ENCODE measurements at regions of chr3 and their contacts with region 1.

Region 1: DNA sequence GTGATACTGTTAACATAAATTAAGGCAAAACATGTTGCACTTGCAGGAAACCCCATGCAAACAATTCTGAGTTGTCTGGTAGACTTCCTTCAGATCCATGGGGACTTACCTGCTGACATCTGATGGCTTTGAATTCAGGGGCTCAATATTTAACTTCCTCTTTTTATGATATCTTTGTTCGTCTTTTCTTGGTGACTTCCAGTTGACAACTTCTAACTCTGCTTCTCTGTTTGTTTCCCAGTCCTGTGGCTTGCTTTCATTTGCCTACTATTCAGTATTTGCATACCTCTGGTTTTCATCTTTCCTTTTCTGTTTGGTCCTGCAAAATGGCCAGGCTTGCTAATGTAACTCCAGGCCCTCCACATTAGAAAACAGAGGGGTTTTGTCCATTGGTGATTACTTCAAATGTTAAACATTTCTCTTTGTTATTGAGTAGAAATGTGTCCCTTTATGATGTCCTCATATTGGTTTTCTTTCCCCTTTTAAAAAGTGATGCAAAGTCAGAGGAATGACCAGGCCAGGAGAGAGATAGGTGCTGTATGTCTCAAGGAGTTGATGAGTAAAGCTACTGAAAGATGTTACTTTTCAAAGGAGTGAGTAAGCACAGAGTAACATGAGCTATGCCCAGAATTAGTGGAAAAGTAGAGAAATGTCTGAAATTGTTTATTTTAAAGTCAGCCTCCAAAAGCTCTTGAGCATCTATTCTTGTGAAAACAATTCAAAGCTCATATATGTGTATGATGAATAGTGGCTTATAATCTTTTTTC is 335.9 kb downstream of the LPP start:
- DNase-seq: no peak
- ATAC-seq: no peak
- H3K4me3 ChIP-seq: no peak overlapping the region
- H3K27ac ChIP-seq: no peak overlapping the region
- H3K4me1 ChIP-seq: peaks cover 14% of the 10 kb centered on the region
- H3K27me3 ChIP-seq: no peaks in the 10 kb centered on the region
- CTCF ChIP-seq: no peak

Region 2: DNA sequence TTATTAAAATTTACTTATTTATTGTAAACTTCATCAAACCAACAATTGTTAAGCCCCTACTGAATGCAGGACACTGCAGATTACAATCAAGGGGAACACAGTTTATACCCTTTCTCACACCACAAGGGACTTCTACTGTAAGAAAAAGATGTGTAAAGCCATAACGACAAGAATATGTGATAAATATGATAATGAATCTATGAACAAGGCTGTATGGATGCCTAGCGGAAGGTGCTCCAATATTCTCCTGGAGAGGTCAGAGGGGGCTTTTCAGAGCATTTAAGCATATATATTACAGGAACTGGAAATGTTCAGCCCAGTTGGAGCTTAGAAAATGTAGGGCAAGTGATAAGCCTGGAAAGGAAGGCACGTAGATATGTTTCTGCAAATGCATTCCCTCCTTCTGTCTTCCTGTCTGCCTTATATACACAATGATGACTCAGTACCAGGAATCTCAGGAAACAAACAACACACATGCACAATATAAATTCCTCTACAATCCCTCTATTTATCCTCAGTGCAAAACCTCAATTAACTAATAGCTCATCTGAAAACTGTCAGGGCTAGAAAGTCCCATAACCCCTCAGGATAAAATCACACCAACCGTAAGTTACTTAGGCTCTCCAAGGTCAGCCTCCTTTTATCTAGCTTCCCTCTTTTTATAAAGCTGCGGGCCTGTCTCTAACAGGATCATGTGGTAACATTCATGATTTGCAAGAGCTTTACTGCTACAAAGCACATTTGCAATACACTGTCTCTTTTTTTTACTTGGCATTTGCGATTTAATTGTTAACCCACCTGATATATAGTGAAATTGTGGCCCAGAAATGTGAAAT is 57.2 kb after region 1 on chr3:
- intact Hi-C with region 1: loop called in 1 of 2 experiments (anchors 5 kb)
- DNase-seq: no peak
- ATAC-seq: no peak
- H3K4me3 ChIP-seq: no peak overlapping the region
- H3K27ac ChIP-seq: no peak overlapping the region
- H3K4me1 ChIP-seq: peaks cover 3% of the 10 kb centered on the region
- H3K27me3 ChIP-seq: no peaks in the 10 kb centered on the region
- CTCF ChIP-seq: no peak

Region 3: DNA sequence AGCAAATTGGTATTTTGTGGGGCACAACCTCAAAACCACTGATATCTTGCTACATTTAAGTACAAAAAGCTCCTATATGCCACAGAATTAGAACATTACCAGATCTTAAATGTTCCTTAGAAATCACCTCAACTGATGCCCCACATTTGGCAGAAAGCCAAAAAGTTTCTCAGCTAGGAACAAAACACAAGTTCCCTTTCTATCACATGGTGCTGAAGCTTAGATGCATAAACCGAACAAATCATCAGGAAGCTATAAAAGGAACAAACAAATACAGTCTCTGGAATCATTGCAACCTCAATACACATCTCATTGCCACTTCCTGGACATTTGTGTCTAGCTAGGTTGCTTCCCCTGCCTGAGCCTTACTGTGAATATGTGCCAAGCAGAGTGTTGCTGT is 156.8 kb after region 1 on chr3:
- intact Hi-C with region 1: no loop called
- DNase-seq: no peak
- ATAC-seq: peak in 1 of 4 donors; percentile 37
- H3K4me3 ChIP-seq: no peak overlapping the region
- H3K27ac ChIP-seq: no peak overlapping the region
- H3K4me1 ChIP-seq: peaks cover 8% of the 10 kb centered on the region
- H3K27me3 ChIP-seq: no peaks in the 10 kb centered on the region
- CTCF ChIP-seq: no peak